ENCODE measurements at regions of chr1 and their contacts with region 1.

Region 1: DNA sequence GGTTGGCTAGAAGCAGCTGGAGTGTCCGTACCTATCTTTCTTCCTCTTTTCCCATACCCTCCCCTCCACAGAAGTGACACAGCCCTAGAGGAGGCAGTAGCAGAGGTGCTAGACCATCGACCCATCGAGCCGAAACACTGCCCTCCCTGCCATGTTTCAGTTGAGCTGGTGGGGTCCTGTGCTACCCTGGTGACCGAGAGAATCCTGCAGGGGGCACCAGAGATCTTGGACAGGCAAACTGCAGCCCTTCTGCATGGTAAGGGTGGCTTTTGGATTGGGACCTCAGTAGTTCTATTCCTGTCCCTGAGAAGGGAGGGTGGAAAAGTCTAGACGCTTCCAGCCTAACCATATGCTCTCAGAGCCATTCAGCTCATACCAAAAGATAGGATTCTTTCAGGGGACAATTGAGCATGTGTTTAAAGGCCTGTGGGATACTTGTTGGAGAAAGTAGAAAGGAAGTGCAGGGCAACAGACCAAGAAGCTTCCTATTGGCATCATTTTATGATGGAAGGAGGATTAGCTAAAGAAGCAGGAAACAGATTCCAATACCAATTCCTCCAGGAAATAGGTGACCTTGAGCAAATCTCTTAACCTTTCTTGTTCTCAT is 11.7 kb upstream of the BNIPL start:
- DNase-seq: peak; percentile 71
- H3K4me3 Mint-ChIP-seq: peak overlapping the region; percentile 26
- H3K27ac Mint-ChIP-seq: no peak overlapping the region
- H3K4me1 Mint-ChIP-seq: peaks cover 6% of the 10 kb centered on the region
- H3K27me3 Mint-ChIP-seq: no peaks in the 10 kb centered on the region

Region 2: GRCh38 chr1:151047925-151048645 is 23.4 kb after region 1 on chr1:
- intact Hi-C with region 1: loop called (anchors 1 kb)
- DNase-seq: peak; percentile 42
- H3K4me3 Mint-ChIP-seq: peak overlapping the region; percentile 86
- H3K27ac Mint-ChIP-seq: peak overlapping the region; percentile 79
- H3K4me1 Mint-ChIP-seq: peaks cover 59% of the 10 kb centered on the region
- H3K27me3 Mint-ChIP-seq: no peaks in the 10 kb centered on the region

Region 3: GRCh38 chr1:151156515-151156819 is 131.8 kb after region 1 on chr1 and contains the start of gene TNFAIP8L2:
- intact Hi-C with region 1: loop called (anchors 1 kb)
- DNase-seq: peak; percentile 72
- H3K4me3 Mint-ChIP-seq: peak within 1 kb of the TSS; percentile 92
- H3K27ac Mint-ChIP-seq: peak within 1 kb of the TSS; percentile 99
- H3K4me1 Mint-ChIP-seq: peaks cover 42% of the 10 kb centered on the region
- H3K27me3 Mint-ChIP-seq: no peaks in the 10 kb centered on the region
- total RNA-seq, gene TNFAIP8L2: 38.0 and 38.5 TPM in 2 replicates

Region 4: GRCh38 chr1:151465026-151465425 is 440.4 kb after region 1 on chr1:
- intact Hi-C with region 1: no loop called
- DNase-seq: no peak
- H3K4me3 Mint-ChIP-seq: no peak overlapping the region
- H3K27ac Mint-ChIP-seq: no peak overlapping the region
- H3K4me1 Mint-ChIP-seq: peaks cover 1% of the 10 kb centered on the region
- H3K27me3 Mint-ChIP-seq: peaks cover 16% of the 10 kb centered on the region

Measured in activated T-helper 1 cell treated with anti-CD3 and anti-CD28 coated beads, Interleukin-12 subunit alpha, Interleukin-12 subunit beta, Interleukin-2, Interleukin-4 antibody, amounts not matched to agents 30 ng/mL and 10 ng/mL and 1 ng/mL, durations not matched to agents 14 hours and 24 hours and 36 hours (primary cell).